Gastrocnemius medialis (tissue), 4 donors: ENCODE measurements at regions of chr18 and their contacts with region 1.

Region 1: DNA sequence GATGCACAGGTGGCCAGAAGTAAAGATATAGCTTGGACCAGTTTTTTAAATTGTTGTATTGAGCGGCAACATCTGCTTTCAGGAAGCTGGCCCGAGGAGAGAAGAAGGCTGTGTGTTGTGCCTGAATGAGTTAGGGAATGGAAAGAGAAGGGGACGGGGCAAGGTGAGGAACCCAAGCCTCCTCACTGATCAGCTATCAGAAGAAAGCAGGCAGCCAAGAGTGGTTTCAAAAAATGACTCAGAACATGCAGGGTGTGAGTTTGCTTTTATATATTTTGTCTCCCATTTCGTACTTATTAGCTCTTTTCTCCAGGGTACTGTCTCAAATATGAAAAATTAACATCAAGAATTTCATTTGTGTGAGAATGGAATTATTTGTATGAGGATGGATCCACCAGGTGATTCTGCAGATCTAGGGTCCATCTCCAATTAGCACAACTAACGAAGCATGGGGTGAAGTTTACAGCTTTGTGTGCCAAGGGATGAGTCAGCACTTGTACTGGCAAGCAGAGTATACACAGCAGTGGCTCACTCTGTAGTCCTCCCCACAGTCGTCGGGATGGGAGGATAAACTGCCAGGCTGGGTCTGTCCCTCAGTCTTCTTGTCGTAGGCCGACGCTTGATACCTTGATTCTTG is 175.7 kb downstream of the PIEZO2 start:
- DNase-seq: no peak
- ATAC-seq: no peak
- H3K4me3 ChIP-seq: no peak overlapping the region
- H3K27ac ChIP-seq: no peak overlapping the region
- H3K4me1 ChIP-seq: no peaks in the 10 kb centered on the region
- H3K27me3 ChIP-seq: no peaks in the 10 kb centered on the region
- CTCF ChIP-seq: no peak
- POLR2A ChIP-seq: no peak

Region 2: DNA sequence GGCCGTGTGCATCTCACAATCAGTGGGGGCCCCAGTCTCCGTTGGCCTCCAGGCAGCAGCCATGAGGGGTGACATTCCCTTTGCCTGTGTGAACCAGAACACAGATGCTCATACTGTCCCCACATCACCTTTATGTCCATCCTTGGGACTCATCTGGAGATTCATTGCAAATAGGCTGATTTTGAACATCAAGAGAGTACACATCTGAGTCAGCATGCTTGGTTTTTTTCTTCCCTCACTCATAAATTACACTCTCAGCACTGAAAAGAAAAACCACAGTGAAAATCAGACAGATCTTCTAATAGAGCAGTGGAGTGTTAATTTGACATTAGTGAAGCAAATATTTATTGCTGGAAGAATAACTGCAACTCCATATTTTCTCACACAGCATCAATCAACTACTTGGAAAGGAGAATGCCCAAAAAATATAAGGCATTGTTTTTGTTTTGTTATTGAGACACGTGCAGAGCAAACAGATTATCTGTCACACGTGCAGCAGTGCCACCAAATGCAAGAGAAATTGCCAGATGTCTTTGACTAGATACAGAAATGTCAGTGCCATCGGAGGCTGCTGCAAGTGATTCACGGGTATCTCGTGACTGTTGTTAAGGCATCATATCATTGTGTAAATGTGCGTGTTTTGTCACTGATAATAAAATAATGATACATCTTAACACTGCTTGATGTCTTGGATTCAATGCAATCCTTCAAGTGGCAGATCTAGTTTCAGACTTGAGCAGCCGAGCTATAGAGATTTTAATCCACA is 508.3 kb before region 1 on chr18:
- in situ Hi-C with region 1: no loop called
- intact Hi-C with region 1: no loop called
- DNase-seq: no peak
- ATAC-seq: no peak
- H3K4me3 ChIP-seq: no peak overlapping the region
- H3K27ac ChIP-seq: no peak overlapping the region
- H3K4me1 ChIP-seq: no peaks in the 10 kb centered on the region
- H3K27me3 ChIP-seq: no peaks in the 10 kb centered on the region
- CTCF ChIP-seq: no peak
- POLR2A ChIP-seq: no peak

Region 3: DNA sequence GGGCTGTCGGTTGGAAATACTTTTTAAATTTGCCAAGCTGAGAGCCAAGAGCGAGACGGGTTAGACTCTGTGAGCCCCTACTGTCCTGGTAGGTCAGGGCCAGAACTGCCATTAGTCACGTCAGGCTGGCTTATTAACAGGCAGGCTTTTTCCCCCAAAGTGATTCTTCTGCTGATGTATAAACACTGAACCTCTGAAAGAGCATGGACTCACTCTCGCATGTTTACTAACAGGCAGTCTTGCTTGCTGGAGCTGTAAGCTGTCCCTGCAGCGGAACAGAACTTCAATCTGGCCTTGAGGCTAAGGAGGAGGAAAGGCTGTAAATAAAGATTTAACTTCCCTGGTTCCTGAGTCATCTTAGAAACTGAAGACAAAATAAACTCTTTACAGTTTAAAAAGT is 112.8 kb before region 1 on chr18:
- in situ Hi-C with region 1: no loop called
- intact Hi-C with region 1: no loop called
- DNase-seq: no peak
- ATAC-seq: no peak
- H3K4me3 ChIP-seq: no peak overlapping the region
- H3K27ac ChIP-seq: no peak overlapping the region
- H3K4me1 ChIP-seq: no peaks in the 10 kb centered on the region
- H3K27me3 ChIP-seq: no peaks in the 10 kb centered on the region
- CTCF ChIP-seq: no peak
- POLR2A ChIP-seq: no peak

Region 4: DNA sequence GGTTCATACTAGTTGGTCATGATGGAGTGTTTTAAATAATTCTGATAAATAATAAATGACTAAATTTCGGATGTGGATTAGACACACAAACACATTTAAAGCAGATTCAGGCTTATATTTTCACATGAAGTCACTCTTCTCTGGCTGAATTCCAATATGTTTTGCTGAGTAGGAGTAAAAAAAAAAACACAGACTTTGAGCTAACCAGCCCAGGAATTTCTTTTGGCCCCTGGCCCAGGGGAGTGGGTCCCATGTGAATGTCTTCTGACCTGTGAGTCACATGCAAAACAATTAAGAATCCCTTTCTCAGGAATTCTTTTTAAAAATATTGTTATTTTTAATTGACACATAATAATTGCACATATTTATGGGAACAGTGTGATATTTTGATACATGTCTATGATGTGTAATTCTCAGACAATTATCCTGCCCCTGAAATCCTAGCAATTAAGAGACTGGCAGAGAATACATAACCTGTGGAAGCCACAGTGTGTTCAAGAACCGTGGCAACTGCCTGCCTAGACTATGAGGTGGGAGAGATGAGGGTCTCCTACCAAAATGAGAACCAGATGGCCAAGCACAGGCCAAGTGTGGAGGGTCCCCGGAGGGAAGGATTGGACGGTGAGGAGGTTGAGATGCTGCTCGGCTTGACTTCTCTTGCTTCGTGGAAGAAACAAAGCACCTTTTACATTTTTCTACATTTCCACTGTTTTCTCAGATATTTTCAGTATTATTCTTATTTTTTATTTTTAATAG is 60.7 kb before region 1 on chr18:
- in situ Hi-C with region 1: loop called in 1 of 4 experiments (anchors 10 kb)
- intact Hi-C with region 1: no loop called
- DNase-seq: no peak
- ATAC-seq: no peak
- H3K4me3 ChIP-seq: no peak overlapping the region
- H3K27ac ChIP-seq: no peak overlapping the region
- H3K4me1 ChIP-seq: no peaks in the 10 kb centered on the region
- H3K27me3 ChIP-seq: no peaks in the 10 kb centered on the region
- CTCF ChIP-seq: no peak
- POLR2A ChIP-seq: no peak

Region 5: DNA sequence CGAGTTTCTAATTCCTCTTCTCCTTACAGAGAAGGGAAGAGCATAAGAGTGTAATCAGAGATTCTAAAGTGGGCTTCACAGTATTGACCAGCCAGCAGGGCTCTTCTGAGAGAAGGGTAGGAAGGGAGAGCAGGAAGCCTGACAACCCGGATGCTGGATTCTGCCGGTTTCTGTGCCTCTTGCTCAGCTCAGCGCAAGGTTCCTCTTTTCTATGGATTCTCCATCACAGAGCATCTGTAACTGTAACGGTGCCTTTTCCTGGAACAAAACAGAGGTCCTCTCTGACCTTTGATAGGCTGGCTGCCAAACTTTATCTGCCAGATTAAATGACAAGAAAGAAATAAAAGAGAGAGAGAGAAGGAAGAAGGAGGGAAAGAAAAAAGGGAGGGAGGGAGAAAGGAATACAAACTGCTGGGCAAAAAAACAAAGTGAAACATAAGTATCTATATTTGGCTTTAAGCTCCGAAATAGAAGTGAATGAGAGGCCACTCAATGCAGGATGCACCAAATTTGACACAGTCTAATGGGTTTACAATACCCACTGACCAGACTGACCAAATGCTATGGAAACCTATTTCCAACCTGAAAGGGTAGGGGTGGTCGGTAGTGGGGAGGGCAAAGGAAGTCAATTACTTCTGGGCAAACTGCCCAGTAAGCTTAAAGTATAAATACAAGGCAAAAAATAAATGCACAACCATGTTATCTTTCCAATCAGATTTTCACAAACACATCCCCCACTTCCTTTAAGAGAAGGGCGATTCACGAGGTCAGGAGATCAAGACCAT is 116.4 kb after region 1 on chr18:
- in situ Hi-C with region 1: no loop called
- intact Hi-C with region 1: no loop called
- DNase-seq: no peak
- ATAC-seq: no peak
- H3K4me3 ChIP-seq: no peak overlapping the region
- H3K27ac ChIP-seq: no peak overlapping the region
- H3K4me1 ChIP-seq: no peaks in the 10 kb centered on the region
- H3K27me3 ChIP-seq: no peaks in the 10 kb centered on the region
- CTCF ChIP-seq: no peak
- POLR2A ChIP-seq: no peak